Natural killer cell (primary cell): ENCODE measurements at regions of chr2 and their contacts with region 1.

Region 1: DNA sequence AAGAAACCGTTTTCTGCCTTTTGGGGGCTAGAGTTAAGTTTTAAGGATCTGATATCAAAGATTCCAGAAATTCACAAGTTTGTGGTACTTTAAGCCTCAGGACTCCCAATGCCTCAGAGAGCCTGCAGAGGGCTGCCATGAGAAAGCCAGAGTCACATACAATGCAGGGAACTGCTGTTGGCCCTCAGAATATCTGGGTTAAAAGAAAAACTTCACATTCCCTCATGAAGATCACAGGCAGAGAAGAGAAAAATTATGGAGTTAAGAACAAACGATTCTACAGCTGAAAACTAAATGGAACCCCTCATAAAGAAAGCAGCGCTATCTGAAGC is 39.5 kb downstream of the HDAC4 start:
- DNase-seq: no peak
- ATAC-seq: no peak
- H3K4me3 ChIP-seq: no peak overlapping the region
- H3K4me3 Mint-ChIP-seq: no peak overlapping the region
- H3K27ac ChIP-seq: no peak overlapping the region
- H3K27ac Mint-ChIP-seq: peak overlapping the region in 1 of 2 donors; percentile 54
- H3K4me1 ChIP-seq: peaks cover 15% of the 10 kb centered on the region
- H3K4me1 Mint-ChIP-seq: peaks cover 37 to 54% of the 10 kb centered on the region in 2 donors
- H3K27me3 ChIP-seq: no peaks in the 10 kb centered on the region
- H3K27me3 Mint-ChIP-seq: peaks cover 0 to 11% of the 10 kb centered on the region in 2 donors
- CTCF ChIP-seq: no peak

Region 2: DNA sequence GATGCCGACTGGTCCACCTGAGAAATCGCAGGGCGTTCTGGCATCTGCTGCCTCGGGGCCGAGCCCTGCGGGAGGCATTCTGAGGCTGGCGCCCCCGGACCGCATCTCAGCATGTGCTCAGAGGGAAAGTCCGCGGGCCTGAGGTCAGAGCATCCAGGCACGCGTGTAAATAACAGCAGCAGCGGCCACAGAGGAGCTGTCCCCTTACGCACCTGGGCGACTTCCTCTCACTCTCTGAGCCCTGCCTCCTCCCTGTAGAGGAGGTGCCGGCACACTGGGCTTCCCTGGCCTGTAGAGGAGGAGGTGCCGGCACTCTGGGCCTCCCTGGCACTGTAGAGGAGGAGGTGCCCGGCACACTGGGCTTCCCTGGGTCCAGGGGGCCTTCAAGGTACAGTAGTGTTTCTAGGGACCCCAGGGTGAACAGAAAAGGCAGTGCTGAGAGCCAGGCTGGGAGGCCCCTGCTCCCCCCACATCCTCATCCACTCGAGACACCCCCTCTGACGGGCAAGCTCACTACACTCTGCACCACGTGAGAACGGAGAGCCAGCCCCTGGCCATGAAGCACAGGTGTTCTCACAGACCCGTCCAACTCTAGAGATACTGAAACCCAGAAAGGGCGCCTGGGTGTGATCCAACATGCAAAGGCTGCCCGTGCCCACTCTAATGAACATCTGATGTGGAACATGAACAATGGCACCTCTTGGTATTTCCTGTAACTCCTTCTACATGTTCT is 223.9 kb before region 1 on chr2:
- intact Hi-C with region 1: loop called (anchors 5 kb)
- DNase-seq: peak in 1 of 2 donors; percentile 20
- ATAC-seq: peak; percentile 75 to 80 (median 77)
- H3K4me3 ChIP-seq: no peak overlapping the region
- H3K4me3 Mint-ChIP-seq: peak overlapping the region; percentile 67
- H3K27ac ChIP-seq: peak overlapping the region; percentile 16
- H3K27ac Mint-ChIP-seq: peak overlapping the region; percentile 73 to 83
- H3K4me1 ChIP-seq: peaks cover 24% of the 10 kb centered on the region
- H3K4me1 Mint-ChIP-seq: peaks cover 35 to 47% of the 10 kb centered on the region in 2 donors
- H3K27me3 ChIP-seq: no peaks in the 10 kb centered on the region
- H3K27me3 Mint-ChIP-seq: peaks cover 0 to 18% of the 10 kb centered on the region in 2 donors
- CTCF ChIP-seq: no peak

Region 3: DNA sequence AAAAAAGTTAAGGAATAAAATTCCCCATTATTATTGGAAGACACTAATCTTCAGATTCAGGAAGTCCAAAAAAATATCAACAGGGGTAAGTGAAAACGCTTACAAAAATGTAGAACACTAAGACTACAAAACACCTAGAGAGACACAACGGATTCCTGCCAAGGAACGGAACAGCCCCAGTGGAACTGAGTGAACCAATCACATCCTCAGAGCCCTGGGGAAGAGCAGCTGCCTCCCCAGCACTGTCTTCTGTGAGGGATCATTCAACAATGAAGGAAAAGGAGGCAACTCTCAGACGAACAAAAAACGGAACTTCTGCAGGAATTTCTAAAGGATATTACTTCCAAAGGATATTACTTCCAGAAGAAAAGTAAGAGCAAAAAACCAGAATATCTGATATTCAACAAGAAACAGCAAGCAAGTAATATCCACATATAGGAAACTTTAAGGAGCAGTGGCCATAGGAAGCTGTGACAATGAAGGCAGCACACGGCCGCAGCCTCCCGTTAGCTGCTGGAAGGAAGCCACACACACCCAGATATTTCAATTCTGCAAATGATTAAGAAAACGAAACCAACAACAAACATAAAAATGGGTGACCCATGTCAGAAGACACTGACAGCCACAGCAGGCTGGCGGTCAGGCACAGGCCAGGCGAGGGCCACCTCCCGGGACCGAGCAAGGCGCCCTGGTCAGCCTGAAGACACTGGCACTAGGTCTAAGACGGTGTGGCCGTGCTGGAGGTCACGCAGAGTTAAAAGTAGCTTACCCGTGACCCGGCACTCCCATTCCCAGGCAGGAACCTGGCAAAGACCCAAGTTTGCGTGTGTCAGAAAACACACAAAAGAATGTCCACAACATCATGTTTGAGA is 42.3 kb before region 1 on chr2:
- intact Hi-C with region 1: loop called (anchors 5 kb)
- DNase-seq: peak; percentile 29 to 58
- ATAC-seq: peak; percentile 34 to 42 (median 40)
- H3K4me3 ChIP-seq: peak overlapping the region; percentile 14
- H3K4me3 Mint-ChIP-seq: peak overlapping the region; percentile 82
- H3K27ac ChIP-seq: peak overlapping the region; percentile 87
- H3K27ac Mint-ChIP-seq: peak overlapping the region; percentile 93 to 94
- H3K4me1 ChIP-seq: peaks cover 56% of the 10 kb centered on the region
- H3K4me1 Mint-ChIP-seq: peaks cover 59 to 61% of the 10 kb centered on the region in 2 donors
- H3K27me3 ChIP-seq: no peaks in the 10 kb centered on the region
- H3K27me3 Mint-ChIP-seq: no peaks in the 10 kb centered on the region
- CTCF ChIP-seq: no peak

Region 4: GRCh38 chr2:239621611-239622010 is 260.3 kb after region 1 on chr2:
- intact Hi-C with region 1: loop called (anchors 5 kb)
- DNase-seq: no peak
- ATAC-seq: no peak
- H3K4me3 ChIP-seq: no peak overlapping the region
- H3K4me3 Mint-ChIP-seq: no peak overlapping the region
- H3K27ac ChIP-seq: no peak overlapping the region
- H3K27ac Mint-ChIP-seq: no peak overlapping the region
- H3K4me1 ChIP-seq: peaks cover 33% of the 10 kb centered on the region
- H3K4me1 Mint-ChIP-seq: peaks cover 41 to 50% of the 10 kb centered on the region in 2 donors
- H3K27me3 ChIP-seq: no peaks in the 10 kb centered on the region
- H3K27me3 Mint-ChIP-seq: no peaks in the 10 kb centered on the region
- CTCF ChIP-seq: no peak